CD8-positive, alpha-beta T cell (primary cell): ENCODE measurements at regions of chr12 and their contacts with region 1.

Region 1: DNA sequence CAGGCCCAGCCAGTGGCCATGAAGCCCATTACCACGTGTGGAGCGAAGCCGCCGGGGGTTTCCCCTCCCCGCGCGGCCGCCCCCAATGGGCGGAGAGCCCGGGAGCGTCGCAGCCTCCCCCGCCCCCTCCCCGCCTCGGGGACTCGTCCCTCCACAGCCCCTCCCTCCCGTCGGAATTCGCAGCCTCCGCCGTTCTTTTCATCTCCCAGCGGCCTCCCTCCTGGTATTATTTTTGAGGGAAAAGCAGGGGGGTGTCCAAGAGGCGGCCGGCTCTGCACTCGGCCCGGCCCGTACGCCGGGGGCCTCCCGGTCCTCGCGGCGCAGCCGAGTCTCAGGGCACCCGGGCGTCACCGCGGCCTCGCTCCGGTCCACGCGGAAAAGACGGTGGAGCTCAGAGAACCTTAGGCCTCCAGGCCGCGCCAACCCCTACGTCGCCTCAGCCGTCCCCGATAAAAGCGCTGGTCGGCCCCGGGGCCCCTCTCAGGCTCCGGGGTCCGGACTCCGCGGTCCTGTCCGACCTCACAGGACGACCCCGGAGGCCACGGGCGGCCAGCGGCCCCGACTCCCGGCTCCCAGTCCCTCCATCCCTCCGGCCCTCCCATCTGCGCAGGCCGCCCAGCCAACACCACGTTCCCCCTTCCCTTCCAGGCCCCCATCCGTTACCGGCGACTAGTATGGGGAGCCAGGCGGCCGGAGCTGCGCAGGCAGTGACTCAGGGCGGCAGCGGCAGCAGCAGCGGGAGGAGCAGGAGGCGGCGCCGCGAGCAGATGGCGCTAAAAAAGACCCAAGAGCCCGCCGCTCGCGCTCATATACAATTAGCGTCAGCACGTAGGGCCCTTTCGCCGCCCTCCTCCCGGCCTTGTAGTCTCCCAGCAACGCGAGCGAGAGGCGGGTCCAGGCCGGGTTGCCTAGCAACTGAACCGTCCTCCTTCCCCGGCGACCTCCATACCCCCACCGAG is at the start of gene NAP1L1:
- DNase-seq: peak; percentile 92 to 98 (median 97)
- ATAC-seq: peak; percentile 83
- H3K4me3 ChIP-seq: peak within 1 kb of the TSS; percentile 69 to 81
- H3K4me3 Mint-ChIP-seq: peak within 1 kb of the TSS; percentile 99
- H3K27ac ChIP-seq: peak within 1 kb of the TSS; percentile 98 to 99
- H3K27ac Mint-ChIP-seq: peak within 1 kb of the TSS; percentile 100
- H3K4me1 ChIP-seq: peaks cover 34% of the 10 kb centered on the region
- H3K4me1 Mint-ChIP-seq: peaks cover 53% of the 10 kb centered on the region
- H3K27me3 ChIP-seq: no peaks in the 10 kb centered on the region
- H3K27me3 Mint-ChIP-seq: no peaks in the 10 kb centered on the region
- CTCF ChIP-seq: no peak
- total RNA-seq, gene NAP1L1: 581 to 618 TPM

Region 2: GRCh38 chr12:75511116-75512048 is 572.8 kb before region 1 on chr12 and contains the start of gene KRR1:
- CTCF ChIA-PET with region 1: no interaction called
- POLR2A ChIA-PET with region 1: no interaction called
- intact Hi-C with region 1: loop called (anchors 1 to 2 kb)
- DNase-seq: peak; percentile 75 to 98 (median 88)
- ATAC-seq: peak; percentile 95
- H3K4me3 ChIP-seq: peak within 1 kb of the TSS; percentile 89 to 93
- H3K4me3 Mint-ChIP-seq: peak within 1 kb of the TSS; percentile 98
- H3K27ac ChIP-seq: peak within 1 kb of the TSS; percentile 89
- H3K27ac Mint-ChIP-seq: peak within 1 kb of the TSS; percentile 98
- H3K4me1 ChIP-seq: peaks cover 18% of the 10 kb centered on the region
- H3K4me1 Mint-ChIP-seq: peaks cover 33% of the 10 kb centered on the region
- H3K27me3 ChIP-seq: no peaks in the 10 kb centered on the region
- H3K27me3 Mint-ChIP-seq: no peaks in the 10 kb centered on the region
- CTCF ChIP-seq: no peak
- total RNA-seq, gene KRR1: 158 to 161 TPM

Region 3: DNA sequence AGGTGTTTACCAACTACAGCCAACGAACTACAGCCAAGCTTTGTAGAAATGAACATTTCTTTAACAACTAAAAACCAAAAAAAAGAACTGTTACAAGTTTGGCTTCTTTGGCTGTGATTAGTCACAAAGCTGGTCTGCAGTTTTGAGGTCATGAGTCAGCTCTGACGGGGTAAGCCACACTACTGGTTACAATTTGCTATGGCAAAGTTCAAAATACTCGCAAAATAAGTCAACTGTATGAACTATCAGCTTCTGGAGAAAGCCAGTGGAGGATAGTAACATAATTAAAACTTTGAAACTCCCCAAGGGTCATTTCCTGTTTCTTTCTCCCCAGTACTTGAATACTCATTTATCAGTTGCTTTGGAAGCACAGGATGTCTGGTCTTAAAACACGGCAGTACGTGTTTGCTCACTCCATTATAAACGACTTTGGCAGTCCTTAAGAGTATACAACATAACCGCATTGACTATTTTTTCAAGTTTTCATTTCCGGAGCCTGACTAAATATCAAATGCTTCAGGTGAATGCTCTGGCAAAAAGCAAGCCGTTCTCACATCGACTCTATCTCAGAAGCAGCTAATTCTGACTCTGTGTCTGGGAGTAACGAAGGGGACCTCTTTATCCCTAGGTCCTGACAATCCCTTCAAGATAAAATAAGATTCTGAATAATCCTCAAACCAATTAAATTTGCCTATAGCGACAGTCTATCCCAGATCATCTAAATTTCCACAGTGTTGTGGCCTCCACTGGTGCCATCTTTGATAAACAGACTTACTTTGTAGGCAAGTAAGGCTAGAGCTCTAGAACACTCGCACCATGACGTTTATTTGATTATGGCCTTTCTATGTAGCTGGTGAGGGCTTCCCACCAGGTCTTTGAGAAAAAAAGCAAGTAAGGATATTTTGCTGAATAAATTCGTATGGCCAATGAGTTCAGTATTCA is 63.2 kb before region 1 on chr12:
- CTCF ChIA-PET with region 1: no interaction called
- POLR2A ChIA-PET with region 1: interaction called, 3 read pairs
- intact Hi-C with region 1: loop called in 1 of 2 experiments (anchors 2 kb)
- DNase-seq: peak; percentile 23 to 91 (median 62)
- ATAC-seq: peak; percentile 79
- H3K4me3 ChIP-seq: peak overlapping the region in 1 of 2 experiments; percentile 9
- H3K4me3 Mint-ChIP-seq: peak overlapping the region; percentile 61
- H3K27ac ChIP-seq: peak overlapping the region; percentile 51 to 86
- H3K27ac Mint-ChIP-seq: peak overlapping the region; percentile 96
- H3K4me1 ChIP-seq: peaks cover 24% of the 10 kb centered on the region
- H3K4me1 Mint-ChIP-seq: peaks cover 24% of the 10 kb centered on the region
- H3K27me3 ChIP-seq: no peaks in the 10 kb centered on the region
- H3K27me3 Mint-ChIP-seq: no peaks in the 10 kb centered on the region
- CTCF ChIP-seq: no peak

Region 4: DNA sequence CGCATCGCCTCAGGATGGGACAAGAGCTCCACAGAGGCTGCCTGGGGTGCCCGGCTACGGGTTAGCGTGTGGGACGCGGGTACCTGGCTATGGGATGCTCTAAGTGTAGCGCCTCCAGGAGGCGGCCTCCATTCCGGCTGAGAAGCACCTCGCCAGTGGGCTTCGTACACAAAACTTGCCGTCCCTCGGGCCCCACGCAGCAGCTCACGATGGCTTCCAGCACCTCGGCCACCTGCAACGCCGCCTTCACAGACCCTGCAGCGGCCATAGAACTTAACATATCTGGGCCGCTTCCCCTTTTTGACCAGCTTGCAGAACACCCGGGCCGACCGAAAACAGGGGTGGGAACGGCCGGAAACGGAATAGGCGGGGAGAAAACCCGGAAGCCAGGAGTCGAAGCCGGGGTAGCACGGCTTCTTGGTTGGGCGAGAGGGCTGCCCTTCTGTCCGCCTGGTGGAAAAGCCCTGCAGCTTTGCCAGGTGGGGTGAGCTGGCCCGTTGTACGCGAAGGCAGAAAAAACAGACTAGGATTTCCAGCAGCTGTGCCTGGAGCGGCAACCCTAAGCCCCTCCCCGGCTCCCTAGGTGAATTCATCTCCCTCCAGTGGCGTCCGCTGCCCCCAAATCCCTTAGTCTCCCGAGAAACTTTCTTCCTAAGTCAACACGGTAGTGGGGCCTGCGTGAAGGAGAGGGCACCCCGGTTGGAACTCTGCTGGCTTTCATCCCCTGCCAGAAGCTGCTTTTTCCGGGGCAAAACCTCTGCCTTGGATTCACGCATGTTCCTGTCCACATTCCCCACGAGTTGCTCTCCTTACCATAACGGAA is 264.1 kb after region 1 on chr12 and contains the start of gene BBS10:
- CTCF ChIA-PET with region 1: interaction called, 3 read pairs
- POLR2A ChIA-PET with region 1: interaction called, 4 read pairs
- intact Hi-C with region 1: loop called (anchors 1 to 2 kb)
- DNase-seq: peak; percentile 71 to 92 (median 88)
- ATAC-seq: peak; percentile 96
- H3K4me3 ChIP-seq: peak within 1 kb of the TSS; percentile 76 to 78
- H3K4me3 Mint-ChIP-seq: peak within 1 kb of the TSS; percentile 96
- H3K27ac ChIP-seq: peak within 1 kb of the TSS; percentile 56 to 81
- H3K27ac Mint-ChIP-seq: peak within 1 kb of the TSS; percentile 93
- H3K4me1 ChIP-seq: peaks cover 14% of the 10 kb centered on the region
- H3K4me1 Mint-ChIP-seq: peaks cover 29% of the 10 kb centered on the region
- H3K27me3 ChIP-seq: no peaks in the 10 kb centered on the region
- H3K27me3 Mint-ChIP-seq: no peaks in the 10 kb centered on the region
- CTCF ChIP-seq: peak; percentile 11
- total RNA-seq, gene BBS10: 1.4 to 1.5 TPM

Region 5: GRCh38 chr12:76559400-76560085 is 475.4 kb after region 1 on chr12 and contains the start of gene OSBPL8:
- CTCF ChIA-PET with region 1: no interaction called
- POLR2A ChIA-PET with region 1: interaction called, 13 read pairs
- intact Hi-C with region 1: loop called (anchors 1 to 2 kb)
- DNase-seq: peak; percentile 94 to 99 (median 96)
- ATAC-seq: peak; percentile 67
- H3K4me3 ChIP-seq: peak within 1 kb of the TSS; percentile 79 to 92
- H3K4me3 Mint-ChIP-seq: peak within 1 kb of the TSS; percentile 96
- H3K27ac ChIP-seq: peak within 1 kb of the TSS; percentile 91 to 98
- H3K27ac Mint-ChIP-seq: peak within 1 kb of the TSS; percentile 96
- H3K4me1 ChIP-seq: peaks cover 40% of the 10 kb centered on the region
- H3K4me1 Mint-ChIP-seq: peaks cover 40% of the 10 kb centered on the region
- H3K27me3 ChIP-seq: no peaks in the 10 kb centered on the region
- H3K27me3 Mint-ChIP-seq: no peaks in the 10 kb centered on the region
- CTCF ChIP-seq: no peak
- total RNA-seq, gene OSBPL8: 112 to 115 TPM